MCF 10A (cell line): ENCODE measurements at regions of chr6 and their contacts with region 1.

Region 1: GRCh38 chr6:2765166-2765895 is at the start of gene WRNIP1:
- DNase-seq: peak; percentile 98
- H3K4me3 Mint-ChIP-seq: peak within 1 kb of the TSS; percentile 71
- H3K27ac Mint-ChIP-seq: peak within 1 kb of the TSS; percentile 98
- H3K4me1 Mint-ChIP-seq: peaks cover 24% of the 10 kb centered on the region
- H3K27me3 Mint-ChIP-seq: no peaks in the 10 kb centered on the region
- CTCF ChIP-seq: peak; percentile 43
- total RNA-seq, gene WRNIP1: 33.4 and 44.8 TPM in 2 replicates

Region 2: DNA sequence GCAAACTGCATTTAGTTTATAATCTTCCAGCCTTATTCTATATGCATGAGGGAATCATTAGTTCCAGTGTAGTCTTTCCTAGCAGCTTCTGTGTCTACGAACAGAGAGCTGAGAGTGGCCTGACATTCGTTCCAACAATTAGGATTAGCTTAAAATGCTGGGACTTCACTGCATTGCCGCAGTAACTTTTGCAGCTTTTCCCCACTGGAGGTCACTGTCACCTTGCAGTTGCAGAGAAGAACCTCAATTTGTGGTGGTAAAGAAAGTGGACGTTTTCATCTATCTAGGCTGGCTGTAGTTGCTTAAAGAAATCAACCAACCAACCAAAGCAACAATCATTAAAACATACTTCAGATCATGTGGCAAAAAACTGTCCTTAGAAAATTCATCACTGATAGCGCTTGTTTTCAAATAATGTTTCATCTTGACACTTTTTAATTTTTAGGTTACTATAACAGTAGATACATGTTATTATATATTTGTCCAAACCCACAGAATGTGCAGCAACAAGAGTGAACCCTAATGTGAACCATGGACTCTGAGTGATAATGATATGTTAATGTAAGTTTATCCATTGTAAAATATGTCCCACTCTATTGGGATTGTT is 26.9 kb before region 1 on chr6:
- CTCF ChIA-PET with region 1: interaction called, 4 read pairs
- POLR2A ChIA-PET with region 1: interaction called, 4 read pairs
- intact Hi-C with region 1: loop called (anchors 1 kb)
- DNase-seq: peak; percentile 52
- H3K4me3 Mint-ChIP-seq: no peak overlapping the region
- H3K27ac Mint-ChIP-seq: no peak overlapping the region
- H3K4me1 Mint-ChIP-seq: no peaks in the 10 kb centered on the region
- H3K27me3 Mint-ChIP-seq: no peaks in the 10 kb centered on the region
- CTCF ChIP-seq: peak; percentile 59

Region 3: GRCh38 chr6:2777250-2777649 is 11.9 kb after region 1 on chr6:
- CTCF ChIA-PET with region 1: interaction called, 4 read pairs
- POLR2A ChIA-PET with region 1: interaction called, 13 read pairs
- intact Hi-C with region 1: no loop called
- DNase-seq: no peak
- H3K4me3 Mint-ChIP-seq: no peak overlapping the region
- H3K27ac Mint-ChIP-seq: peak overlapping the region; percentile 8
- H3K4me1 Mint-ChIP-seq: no peaks in the 10 kb centered on the region
- H3K27me3 Mint-ChIP-seq: no peaks in the 10 kb centered on the region
- CTCF ChIP-seq: no peak

Region 4: GRCh38 chr6:2818593-2818992 is 53.3 kb after region 1 on chr6:
- CTCF ChIA-PET with region 1: no interaction called
- POLR2A ChIA-PET with region 1: interaction called, 12 read pairs
- intact Hi-C with region 1: no loop called
- DNase-seq: no peak
- H3K4me3 Mint-ChIP-seq: no peak overlapping the region
- H3K27ac Mint-ChIP-seq: peak overlapping the region; percentile 90
- H3K4me1 Mint-ChIP-seq: peaks cover 28% of the 10 kb centered on the region
- H3K27me3 Mint-ChIP-seq: no peaks in the 10 kb centered on the region
- CTCF ChIP-seq: no peak

Region 5: GRCh38 chr6:2846873-2847224 is 81.5 kb after region 1 on chr6:
- CTCF ChIA-PET with region 1: interaction called, 13 read pairs
- POLR2A ChIA-PET with region 1: interaction called, 34 read pairs
- intact Hi-C with region 1: no loop called
- DNase-seq: no peak
- H3K4me3 Mint-ChIP-seq: peak overlapping the region; percentile 54
- H3K27ac Mint-ChIP-seq: peak overlapping the region; percentile 71
- H3K4me1 Mint-ChIP-seq: peaks cover 19% of the 10 kb centered on the region
- H3K27me3 Mint-ChIP-seq: no peaks in the 10 kb centered on the region
- CTCF ChIP-seq: no peak